ENCODE measurements at regions of chr4 and their contacts with region 1.

Region 1: GRCh38 chr4:154738426-154738825 is 5.4 kb upstream of the LRAT start:
- DNase-seq: no peak
- H3K4me3 ChIP-seq: no peak overlapping the region
- H3K27ac ChIP-seq: no peak overlapping the region
- H3K4me1 ChIP-seq: peaks cover 6 to 26% (median 19%) of the 10 kb centered on the region in 4 experiments
- H3K27me3 ChIP-seq: peaks cover 0 to 23% (median 17%) of the 10 kb centered on the region in 4 experiments; a peak in 6 of 7 replicates
- CTCF ChIP-seq: no peak
- EP300 ChIP-seq: no peak
- POLR2A ChIP-seq: no peak
- RAD21 ChIP-seq: no peak

Region 2: DNA sequence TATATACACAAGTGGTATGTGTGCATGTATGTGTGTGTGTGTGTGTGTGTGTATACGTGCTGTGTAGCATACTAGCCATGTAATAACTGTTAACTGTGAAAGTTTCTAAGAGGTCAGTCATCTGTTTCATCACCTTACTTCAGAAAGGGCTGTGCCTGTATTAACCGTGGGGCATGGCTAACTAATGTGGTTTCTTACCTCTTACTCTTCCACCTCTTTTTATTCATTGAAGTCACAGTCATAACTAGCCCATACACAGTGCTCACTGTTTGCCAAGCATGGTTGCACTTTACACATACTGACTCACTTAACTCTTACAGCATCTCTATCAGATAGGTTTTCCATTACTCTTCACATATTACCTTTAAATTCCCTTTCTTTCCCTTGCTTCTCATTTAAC is 18.3 kb before region 1 on chr4:
- CTCF ChIA-PET with region 1: interaction called, 14 read pairs
- POLR2A ChIA-PET with region 1: interaction called, 17 read pairs
- DNase-seq: no peak
- H3K4me3 ChIP-seq: no peak overlapping the region
- H3K27ac ChIP-seq: no peak overlapping the region
- H3K4me1 ChIP-seq: peaks cover 0 to 6% (median 4%) of the 10 kb centered on the region in 4 experiments; a peak in 3 of 7 replicates
- H3K27me3 ChIP-seq: no peaks in the 10 kb centered on the region
- CTCF ChIP-seq: no peak
- EP300 ChIP-seq: no peak
- POLR2A ChIP-seq: no peak
- RAD21 ChIP-seq: no peak

Region 3: DNA sequence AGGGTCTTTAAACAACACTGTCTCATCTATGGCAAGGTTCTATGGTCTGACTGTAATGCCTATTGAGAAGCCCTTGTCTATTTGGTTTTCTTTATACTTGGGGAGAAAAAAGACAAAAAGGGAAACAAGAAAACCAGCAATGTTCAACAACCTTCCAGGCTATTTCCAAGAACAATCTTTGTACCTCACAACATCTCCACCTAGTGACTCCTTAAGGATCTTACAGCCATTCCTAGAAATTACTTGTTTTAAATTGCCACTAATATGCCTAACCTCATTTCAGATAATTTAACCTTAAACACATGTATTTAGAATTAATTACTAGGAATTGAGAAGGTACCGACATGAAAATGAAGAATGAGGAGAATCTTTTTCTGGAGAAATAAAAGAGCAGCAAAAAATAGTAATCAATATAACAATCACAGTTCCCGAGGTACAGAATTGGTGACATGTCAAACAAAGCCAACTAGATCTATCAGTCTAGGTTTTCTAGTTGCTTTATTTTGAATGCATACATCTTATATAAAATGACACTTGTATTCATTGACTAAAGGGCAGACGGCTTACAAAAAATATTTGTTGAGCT is 41.0 kb after region 1 on chr4:
- CTCF ChIA-PET with region 1: interaction called, 11 read pairs
- POLR2A ChIA-PET with region 1: interaction called, 7 read pairs
- DNase-seq: no peak
- H3K4me3 ChIP-seq: no peak overlapping the region
- H3K27ac ChIP-seq: no peak overlapping the region
- H3K4me1 ChIP-seq: no peaks in the 10 kb centered on the region
- H3K27me3 ChIP-seq: no peaks in the 10 kb centered on the region
- CTCF ChIP-seq: peak in 2 of 3 experiments; percentile 58; a peak in 2 of 4 replicates
- EP300 ChIP-seq: no peak
- POLR2A ChIP-seq: no peak
- RAD21 ChIP-seq: peak; percentile 73 to 74

Region 4: DNA sequence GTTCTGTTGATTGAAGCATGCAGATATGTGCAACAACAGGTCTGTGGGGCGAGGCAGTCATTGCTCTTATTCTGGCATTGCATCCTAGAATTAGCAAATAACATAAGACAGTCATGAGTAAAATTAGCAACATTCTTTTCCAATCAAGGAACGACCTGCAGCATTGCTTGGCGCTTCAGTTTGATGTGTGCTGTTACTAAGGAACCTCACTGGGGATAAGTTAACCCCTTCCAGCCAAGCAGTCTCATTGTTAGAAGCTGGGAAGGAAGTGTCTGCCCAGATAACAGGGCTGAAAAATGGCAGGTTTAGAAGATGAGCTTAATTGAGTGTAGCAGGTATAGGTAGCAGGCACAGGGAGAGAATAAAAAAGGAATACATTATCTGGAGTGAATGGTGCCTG is 98.1 kb after region 1 on chr4:
- CTCF ChIA-PET with region 1: no interaction called
- POLR2A ChIA-PET with region 1: no interaction called
- DNase-seq: no peak
- H3K4me3 ChIP-seq: no peak overlapping the region
- H3K27ac ChIP-seq: no peak overlapping the region
- H3K4me1 ChIP-seq: peaks cover 0 to 4% (median 2%) of the 10 kb centered on the region in 4 experiments; a peak in 3 of 7 replicates
- H3K27me3 ChIP-seq: no peaks in the 10 kb centered on the region
- CTCF ChIP-seq: no peak
- EP300 ChIP-seq: no peak
- POLR2A ChIP-seq: no peak
- RAD21 ChIP-seq: no peak

Region 5: DNA sequence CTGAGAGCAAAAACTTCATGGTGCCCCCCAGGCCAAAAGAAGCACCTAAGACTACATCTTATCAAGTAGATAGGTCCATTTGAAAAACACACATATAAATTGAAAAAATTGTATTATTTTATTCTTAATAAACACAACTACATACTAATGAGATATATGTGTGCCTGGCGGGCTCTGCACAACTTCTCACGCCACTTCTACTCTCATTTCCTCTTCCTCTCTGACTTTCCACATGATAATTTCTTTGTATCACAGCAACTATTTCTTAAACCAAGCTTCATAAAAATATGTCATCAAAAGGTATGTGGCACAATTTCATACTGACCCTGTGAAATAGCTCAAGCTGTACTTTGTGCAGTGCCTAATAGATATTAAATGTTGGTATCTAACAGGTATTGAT is 459.3 kb after region 1 on chr4:
- CTCF ChIA-PET with region 1: no interaction called
- POLR2A ChIA-PET with region 1: no interaction called
- DNase-seq: no peak
- H3K4me3 ChIP-seq: no peak overlapping the region
- H3K27ac ChIP-seq: no peak overlapping the region
- H3K4me1 ChIP-seq: no peaks in the 10 kb centered on the region
- H3K27me3 ChIP-seq: no peaks in the 10 kb centered on the region
- CTCF ChIP-seq: no peak
- EP300 ChIP-seq: no peak
- POLR2A ChIP-seq: no peak
- RAD21 ChIP-seq: no peak

Region 6: DNA sequence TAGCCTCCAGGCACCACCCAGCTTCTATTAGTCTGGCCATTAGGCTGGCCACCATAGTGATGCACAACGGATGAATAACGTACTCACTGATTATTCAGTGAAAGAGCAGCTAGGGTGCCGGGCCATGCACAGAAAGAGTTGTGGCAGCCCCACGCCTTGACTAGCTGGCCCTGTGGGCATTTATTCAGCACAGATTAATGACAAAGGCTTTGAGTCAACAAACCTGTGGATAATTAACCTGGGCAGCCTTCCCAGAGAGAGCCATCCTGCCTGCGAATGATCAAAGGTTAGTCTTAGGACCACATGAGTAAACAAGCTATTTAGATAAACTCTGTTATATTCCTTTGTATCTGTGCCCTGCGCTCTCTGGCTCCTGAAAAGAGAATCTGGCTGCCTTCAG is 601.2 kb after region 1 on chr4:
- CTCF ChIA-PET with region 1: no interaction called
- POLR2A ChIA-PET with region 1: no interaction called
- DNase-seq: no peak
- H3K4me3 ChIP-seq: no peak overlapping the region
- H3K27ac ChIP-seq: no peak overlapping the region
- H3K4me1 ChIP-seq: no peaks in the 10 kb centered on the region
- H3K27me3 ChIP-seq: no peaks in the 10 kb centered on the region
- CTCF ChIP-seq: no peak
- EP300 ChIP-seq: no peak
- POLR2A ChIP-seq: no peak
- RAD21 ChIP-seq: no peak